CD8-positive, alpha-beta T cell (primary cell): ENCODE measurements at regions of chr15 and their contacts with region 1.

Region 1: GRCh38 chr15:45166834-45167630 is 20.7 kb downstream of the SHF start:
- DNase-seq: peak; percentile 64 to 90 (median 84)
- ATAC-seq: peak; percentile 90
- H3K4me3 ChIP-seq: peak overlapping the region; percentile 73 to 81
- H3K4me3 Mint-ChIP-seq: peak overlapping the region; percentile 81
- H3K27ac ChIP-seq: peak overlapping the region; percentile 86 to 87
- H3K27ac Mint-ChIP-seq: peak overlapping the region; percentile 87
- H3K4me1 ChIP-seq: peaks cover 17% of the 10 kb centered on the region
- H3K4me1 Mint-ChIP-seq: peaks cover 19% of the 10 kb centered on the region
- H3K27me3 ChIP-seq: no peaks in the 10 kb centered on the region
- H3K27me3 Mint-ChIP-seq: no peaks in the 10 kb centered on the region
- CTCF ChIP-seq: peak; percentile 47

Region 2: GRCh38 chr15:45126535-45127158 is 40.4 kb before region 1 on chr15:
- CTCF ChIA-PET with region 1: interaction called, 4 read pairs
- POLR2A ChIA-PET with region 1: interaction called, 3 read pairs
- intact Hi-C with region 1: loop called in 1 of 2 experiments (anchors 1 kb)
- DNase-seq: peak in 5 of 9 experiments; percentile 36 to 68 (median 52)
- ATAC-seq: peak; percentile 60
- H3K4me3 ChIP-seq: no peak overlapping the region
- H3K4me3 Mint-ChIP-seq: no peak overlapping the region
- H3K27ac ChIP-seq: no peak overlapping the region
- H3K27ac Mint-ChIP-seq: no peak overlapping the region
- H3K4me1 ChIP-seq: no peaks in the 10 kb centered on the region
- H3K4me1 Mint-ChIP-seq: peaks cover 5% of the 10 kb centered on the region
- H3K27me3 ChIP-seq: peaks cover 9 to 28% of the 10 kb centered on the region in 2 experiments
- H3K27me3 Mint-ChIP-seq: peaks cover 64% of the 10 kb centered on the region
- CTCF ChIP-seq: peak; percentile 59

Region 3: DNA sequence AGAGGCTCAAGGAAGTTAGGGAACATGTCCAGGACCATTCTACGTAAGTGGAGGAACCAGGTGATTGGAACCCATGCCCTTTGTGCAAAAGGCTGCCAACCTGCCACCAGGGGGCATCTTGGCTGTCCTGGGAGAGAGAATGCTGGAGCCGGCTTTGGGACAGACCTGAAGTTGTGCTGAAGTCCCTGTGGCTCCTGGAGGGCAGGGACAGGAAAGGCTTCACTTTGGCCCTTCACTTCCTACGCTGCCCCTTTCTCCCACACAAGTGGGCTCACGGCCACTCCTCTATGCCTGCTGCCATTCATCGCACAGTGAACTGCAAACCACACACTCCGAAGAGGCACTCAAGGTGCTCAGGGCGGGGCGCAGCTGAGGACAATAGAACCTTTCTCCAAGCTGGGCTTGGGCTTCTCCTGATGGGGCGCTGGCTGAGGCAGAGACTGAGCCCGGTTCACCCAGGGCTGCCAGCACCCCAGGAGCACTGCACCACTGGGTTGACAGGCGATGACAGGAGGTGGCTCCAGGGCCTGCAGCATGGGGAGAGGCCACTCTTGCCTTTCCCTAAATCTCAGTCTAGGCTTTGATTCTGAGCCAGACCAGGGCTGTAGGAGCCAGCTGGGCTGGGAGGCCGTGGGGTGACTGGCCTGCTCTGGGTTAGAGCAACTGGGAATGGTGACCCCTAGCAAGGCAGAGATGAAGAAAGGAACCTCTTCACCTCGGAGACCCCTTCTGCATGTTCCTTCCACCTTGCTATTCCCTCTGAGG is 12.4 kb after region 1 on chr15:
- CTCF ChIA-PET with region 1: interaction called, 47 read pairs
- POLR2A ChIA-PET with region 1: interaction called, 6 read pairs
- intact Hi-C with region 1: no loop called
- DNase-seq: peak in 8 of 9 experiments; percentile 37 to 71 (median 59)
- ATAC-seq: peak; percentile 67
- H3K4me3 ChIP-seq: no peak overlapping the region
- H3K4me3 Mint-ChIP-seq: no peak overlapping the region
- H3K27ac ChIP-seq: no peak overlapping the region
- H3K27ac Mint-ChIP-seq: no peak overlapping the region
- H3K4me1 ChIP-seq: no peaks in the 10 kb centered on the region
- H3K4me1 Mint-ChIP-seq: peaks cover 15% of the 10 kb centered on the region
- H3K27me3 ChIP-seq: no peaks in the 10 kb centered on the region
- H3K27me3 Mint-ChIP-seq: no peaks in the 10 kb centered on the region
- CTCF ChIP-seq: peak; percentile 46

Region 4: DNA sequence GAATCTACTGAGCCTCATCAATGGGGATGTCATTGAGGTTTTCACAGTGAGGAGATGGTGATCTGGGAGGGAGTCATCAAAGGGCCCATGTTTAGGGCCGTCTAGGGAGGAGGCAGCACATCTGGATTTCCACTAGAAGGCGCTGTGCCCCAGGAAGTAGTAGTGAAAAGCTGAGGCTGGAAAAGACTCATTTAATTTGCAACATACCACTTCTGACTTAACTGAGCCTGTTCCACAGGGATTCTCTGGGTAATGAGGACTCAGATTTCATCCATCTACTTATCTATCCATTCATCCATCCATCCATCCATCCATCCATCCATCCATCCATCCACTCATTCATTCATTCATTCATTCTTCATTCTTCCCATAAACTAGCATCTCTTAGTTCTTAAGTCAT is 38.2 kb after region 1 on chr15:
- CTCF ChIA-PET with region 1: interaction called, 19 read pairs
- POLR2A ChIA-PET with region 1: interaction called, 33 read pairs
- intact Hi-C with region 1: loop called (anchors 1 kb)
- DNase-seq: peak in 6 of 9 experiments; percentile 35 to 78 (median 61)
- ATAC-seq: peak; percentile 11
- H3K4me3 ChIP-seq: no peak overlapping the region
- H3K4me3 Mint-ChIP-seq: no peak overlapping the region
- H3K27ac ChIP-seq: no peak overlapping the region
- H3K27ac Mint-ChIP-seq: no peak overlapping the region
- H3K4me1 ChIP-seq: peaks cover 5% of the 10 kb centered on the region
- H3K4me1 Mint-ChIP-seq: no peaks in the 10 kb centered on the region
- H3K27me3 ChIP-seq: no peaks in the 10 kb centered on the region
- H3K27me3 Mint-ChIP-seq: peaks cover 12% of the 10 kb centered on the region
- CTCF ChIP-seq: peak; percentile 70

Region 5: DNA sequence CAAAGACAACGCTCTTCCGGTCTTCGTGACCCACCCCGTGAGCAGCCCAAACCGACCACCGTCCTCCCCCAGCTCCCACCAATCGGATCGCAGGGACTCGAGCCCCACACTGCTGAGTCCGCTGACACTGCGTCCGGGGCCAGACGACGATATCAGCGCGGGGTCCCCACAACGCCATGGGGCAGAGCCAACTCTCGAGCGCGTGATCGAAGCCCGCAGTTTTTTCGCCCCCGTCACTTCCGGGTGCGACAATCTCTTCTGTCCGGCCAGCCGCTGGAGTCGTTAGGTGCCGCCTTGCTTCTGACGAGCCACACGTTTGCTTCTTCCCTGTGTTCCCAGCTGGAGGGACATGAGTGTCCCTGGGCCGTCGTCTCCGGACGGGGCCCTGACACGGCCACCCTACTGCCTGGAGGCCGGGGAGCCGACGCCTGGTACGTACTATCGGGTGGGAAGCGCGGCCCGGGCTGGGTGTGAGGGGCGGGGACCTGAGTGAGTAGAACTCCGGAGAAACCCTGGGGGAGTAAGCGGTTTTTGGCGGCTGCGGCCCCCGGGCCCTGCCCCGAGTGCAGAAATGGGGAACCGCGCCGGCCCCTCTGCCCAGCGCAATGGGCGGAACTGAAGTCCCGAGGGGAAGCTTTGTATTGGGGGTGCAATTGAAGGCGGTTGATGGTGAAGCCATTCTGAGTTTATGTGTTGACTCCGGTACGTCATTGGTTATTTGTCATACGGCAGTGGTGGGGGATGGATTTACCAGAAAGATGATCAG is 420.2 kb after region 1 on chr15 and contains the start of gene BLOC1S6:
- CTCF ChIA-PET with region 1: no interaction called
- POLR2A ChIA-PET with region 1: no interaction called
- intact Hi-C with region 1: loop called (anchors 10 kb)
- DNase-seq: peak; percentile 83 to 95 (median 90)
- ATAC-seq: peak; percentile 77
- H3K4me3 ChIP-seq: peak within 1 kb of the TSS; percentile 82 to 86
- H3K4me3 Mint-ChIP-seq: peak within 1 kb of the TSS; percentile 100
- H3K27ac ChIP-seq: peak within 1 kb of the TSS; percentile 93 to 98
- H3K27ac Mint-ChIP-seq: peak within 1 kb of the TSS; percentile 100
- H3K4me1 ChIP-seq: peaks cover 32% of the 10 kb centered on the region
- H3K4me1 Mint-ChIP-seq: peaks cover 50% of the 10 kb centered on the region
- H3K27me3 ChIP-seq: no peaks in the 10 kb centered on the region
- H3K27me3 Mint-ChIP-seq: no peaks in the 10 kb centered on the region
- CTCF ChIP-seq: no peak
- total RNA-seq, gene BLOC1S6: 78.1 to 78.9 TPM